Panc1 (cell line): ENCODE measurements at regions of chr11 and their contacts with region 1.

Region 1: GRCh38 chr11:34034043-34034442 is 17.5 kb upstream of the CAPRIN1 start:
- DNase-seq: no peak
- ATAC-seq: no peak
- H3K4me3 ChIP-seq: no peak overlapping the region
- H3K27ac ChIP-seq: no peak overlapping the region
- H3K4me1 ChIP-seq: no peaks in the 10 kb centered on the region
- H3K27me3 ChIP-seq: no peaks in the 10 kb centered on the region
- CTCF ChIP-seq: no peak

Region 2: DNA sequence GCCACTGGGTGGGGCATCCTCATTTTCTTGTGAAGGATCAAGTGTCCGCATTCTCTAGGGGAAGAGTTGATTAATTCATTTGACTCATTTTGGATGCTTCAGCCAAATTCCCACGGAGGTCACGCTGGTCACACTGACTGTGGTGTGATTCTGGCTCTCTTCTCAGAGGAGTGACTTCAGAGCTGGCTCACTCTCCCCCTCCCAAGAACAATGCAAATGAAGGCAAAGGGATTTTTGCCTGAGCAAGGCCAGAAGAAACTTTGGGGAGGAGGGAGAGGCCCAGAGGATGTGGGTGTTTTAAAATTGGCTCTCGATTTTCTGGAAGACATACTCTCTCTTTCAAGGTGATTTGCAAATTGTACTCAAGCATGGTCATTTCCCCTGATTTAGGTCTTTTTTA is 91.1 kb before region 1 on chr11:
- CTCF ChIA-PET with region 1: interaction called, 10 read pairs
- POLR2A ChIA-PET with region 1: no interaction called
- in situ Hi-C with region 1: no loop called
- intact Hi-C with region 1: no loop called
- DNase-seq: no peak
- ATAC-seq: no peak
- H3K4me3 ChIP-seq: no peak overlapping the region
- H3K27ac ChIP-seq: no peak overlapping the region
- H3K4me1 ChIP-seq: no peaks in the 10 kb centered on the region
- H3K27me3 ChIP-seq: no peaks in the 10 kb centered on the region; the same call in 1 of the 2 replicates
- CTCF ChIP-seq: no peak

Region 3: GRCh38 chr11:34585735-34586487 is 551.9 kb after region 1 on chr11:
- CTCF ChIA-PET with region 1: no interaction called
- POLR2A ChIA-PET with region 1: no interaction called
- in situ Hi-C with region 1: no loop called
- intact Hi-C with region 1: no loop called
- DNase-seq: peak; percentile 64
- ATAC-seq: peak; percentile 72
- H3K4me3 ChIP-seq: peak overlapping the region in 1 of 2 experiments; percentile 25; a peak in 2 of 4 replicates
- H3K27ac ChIP-seq: peak overlapping the region; percentile 69
- H3K4me1 ChIP-seq: 0 out of 2 replicates have a peak, but pooled peaks cover 3% of the 10 kb centered on the region
- H3K27me3 ChIP-seq: no peaks in the 10 kb centered on the region; the same call in 1 of the 2 replicates
- CTCF ChIP-seq: peak; percentile 76